Transverse colon (tissue), 4 donors: ENCODE measurements at regions of chr17 and their contacts with region 1.

Region 1: GRCh38 chr17:43694077-43694870 is 32.6 kb upstream of the MEOX1 start:
- DNase-seq: peak; percentile 78
- H3K4me3 ChIP-seq: no peak overlapping the region
- H3K27ac ChIP-seq: no peak overlapping the region
- H3K4me1 ChIP-seq: peaks cover 0 to 8% (median 2%) of the 10 kb centered on the region in 4 donors
- H3K27me3 ChIP-seq: peaks cover 6% of the 10 kb centered on the region
- CTCF ChIP-seq: peak; percentile 90 to 96 (median 92)
- EP300 ChIP-seq: no peak
- POLR2A ChIP-seq: no peak

Region 2: GRCh38 chr17:43546319-43547188 is 147.7 kb before region 1 on chr17 and contains the start of gene ETV4:
- in situ Hi-C with region 1: no loop called
- intact Hi-C with region 1: no loop called
- DNase-seq: peak; percentile 92
- H3K4me3 ChIP-seq: peak within 1 kb of the TSS; percentile 33 to 61 (median 42)
- H3K27ac ChIP-seq: peak within 1 kb of the TSS in 2 of 4 donors; percentile 36 to 47
- H3K4me1 ChIP-seq: peaks cover 15 to 33% (median 30%) of the 10 kb centered on the region in 4 donors
- H3K27me3 ChIP-seq: peaks cover 44% of the 10 kb centered on the region
- CTCF ChIP-seq: no peak
- EP300 ChIP-seq: no peak
- POLR2A ChIP-seq: no peak
- total RNA-seq, gene ETV4: 0.41 to 1.3 TPM in 2 of 4 donors, not detected in the others

Region 3: DNA sequence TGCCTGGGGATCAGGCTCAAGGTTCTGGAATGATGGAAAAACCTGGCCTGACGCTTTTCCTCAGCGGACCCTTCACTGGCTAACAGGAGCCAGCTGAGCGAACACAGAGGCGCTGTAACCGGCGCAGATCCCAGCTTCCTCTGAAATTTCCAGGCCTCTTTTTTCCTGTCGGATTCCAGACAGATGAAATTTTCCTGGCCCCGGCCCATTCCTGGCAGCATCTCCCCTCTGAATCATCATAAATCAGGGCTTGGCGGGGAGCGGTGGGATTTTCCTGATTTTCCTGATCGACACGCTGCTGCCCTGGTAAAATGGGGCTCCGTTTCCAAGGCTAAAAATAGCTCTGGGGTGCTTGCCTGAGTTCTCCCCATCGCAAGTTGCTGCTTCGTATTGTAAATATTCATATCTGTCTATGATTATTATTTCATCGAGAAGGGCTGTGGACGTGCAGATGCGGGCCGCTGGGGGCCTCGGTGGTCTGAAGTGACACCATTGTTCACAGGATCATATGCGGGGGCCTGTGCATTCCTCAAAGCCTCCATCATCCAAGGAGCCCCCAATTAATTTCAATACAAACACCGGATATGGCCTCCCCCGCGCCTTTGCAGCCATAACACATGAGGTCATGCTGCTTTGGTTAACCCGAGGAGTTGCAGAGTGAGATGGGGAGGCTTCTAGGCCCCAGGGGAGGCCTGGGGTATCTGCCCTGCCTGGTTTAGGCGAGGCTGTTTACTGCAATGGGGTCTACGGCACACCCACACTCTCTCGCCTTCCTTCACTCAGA is 102.3 kb before region 1 on chr17:
- in situ Hi-C with region 1: no loop called
- intact Hi-C with region 1: no loop called
- DNase-seq: peak; percentile 39
- H3K4me3 ChIP-seq: no peak overlapping the region
- H3K27ac ChIP-seq: peak overlapping the region; percentile 62 to 70 (median 67)
- H3K4me1 ChIP-seq: peaks cover 0 to 19% (median 2%) of the 10 kb centered on the region in 4 donors
- H3K27me3 ChIP-seq: no peaks in the 10 kb centered on the region
- CTCF ChIP-seq: no peak
- EP300 ChIP-seq: no peak
- POLR2A ChIP-seq: no peak

Region 4: DNA sequence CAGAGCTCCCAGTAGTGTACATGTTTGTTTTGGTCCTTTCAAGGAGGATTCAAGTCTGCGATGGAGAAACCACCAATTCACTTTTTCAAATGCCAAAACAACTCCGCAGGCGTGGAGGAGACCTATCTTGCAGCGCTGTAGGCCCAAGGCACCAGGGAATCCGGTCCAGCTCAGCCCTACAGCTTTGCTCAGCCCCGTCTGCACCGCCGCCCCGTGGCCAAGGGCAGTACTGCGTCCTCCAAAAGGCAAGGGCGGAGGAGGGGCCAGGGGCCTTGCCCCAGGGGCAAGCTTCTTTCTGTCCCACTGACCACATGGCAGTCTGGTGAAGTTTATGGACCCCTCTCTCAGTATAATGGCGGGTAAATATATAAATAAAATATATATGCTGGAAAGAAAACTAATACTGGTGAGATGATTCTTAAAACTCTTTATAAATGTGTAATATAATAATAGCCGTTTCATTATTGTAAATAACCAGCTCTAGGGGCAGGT is 152.0 kb after region 1 on chr17:
- in situ Hi-C with region 1: no loop called
- intact Hi-C with region 1: loop called (anchors 10 kb)
- DNase-seq: peak; percentile 87
- H3K4me3 ChIP-seq: no peak overlapping the region
- H3K27ac ChIP-seq: no peak overlapping the region
- H3K4me1 ChIP-seq: peaks cover 0 to 7% (median 0%) of the 10 kb centered on the region in 4 donors
- H3K27me3 ChIP-seq: peaks cover 6% of the 10 kb centered on the region
- CTCF ChIP-seq: peak; percentile 95 to 99 (median 98)
- EP300 ChIP-seq: no peak
- POLR2A ChIP-seq: no peak